Dendritic cell treated with granulocyte-macrophage colony-stimulating factor and Interleukin-4, amounts not matched to agents 40 ng/mL and 50 ng/mL, for 4 days (primary cell): ENCODE measurements at regions of chr1 and their contacts with region 1.

Region 1: GRCh38 chr1:109041621-109042468 is at the start of gene WDR47:
- H3K4me3 Mint-ChIP-seq: peak within 1 kb of the TSS; percentile 98
- H3K27ac Mint-ChIP-seq: peak within 1 kb of the TSS; percentile 93
- H3K4me1 Mint-ChIP-seq: peaks cover 5% of the 10 kb centered on the region
- H3K27me3 Mint-ChIP-seq: peaks cover 8% of the 10 kb centered on the region

Region 2: GRCh38 chr1:108801101-108801500 is 240.7 kb before region 1 on chr1:
- intact Hi-C with region 1: no loop called
- H3K4me3 Mint-ChIP-seq: no peak overlapping the region
- H3K27ac Mint-ChIP-seq: no peak overlapping the region
- H3K4me1 Mint-ChIP-seq: no peaks in the 10 kb centered on the region
- H3K27me3 Mint-ChIP-seq: no peaks in the 10 kb centered on the region

Region 3: DNA sequence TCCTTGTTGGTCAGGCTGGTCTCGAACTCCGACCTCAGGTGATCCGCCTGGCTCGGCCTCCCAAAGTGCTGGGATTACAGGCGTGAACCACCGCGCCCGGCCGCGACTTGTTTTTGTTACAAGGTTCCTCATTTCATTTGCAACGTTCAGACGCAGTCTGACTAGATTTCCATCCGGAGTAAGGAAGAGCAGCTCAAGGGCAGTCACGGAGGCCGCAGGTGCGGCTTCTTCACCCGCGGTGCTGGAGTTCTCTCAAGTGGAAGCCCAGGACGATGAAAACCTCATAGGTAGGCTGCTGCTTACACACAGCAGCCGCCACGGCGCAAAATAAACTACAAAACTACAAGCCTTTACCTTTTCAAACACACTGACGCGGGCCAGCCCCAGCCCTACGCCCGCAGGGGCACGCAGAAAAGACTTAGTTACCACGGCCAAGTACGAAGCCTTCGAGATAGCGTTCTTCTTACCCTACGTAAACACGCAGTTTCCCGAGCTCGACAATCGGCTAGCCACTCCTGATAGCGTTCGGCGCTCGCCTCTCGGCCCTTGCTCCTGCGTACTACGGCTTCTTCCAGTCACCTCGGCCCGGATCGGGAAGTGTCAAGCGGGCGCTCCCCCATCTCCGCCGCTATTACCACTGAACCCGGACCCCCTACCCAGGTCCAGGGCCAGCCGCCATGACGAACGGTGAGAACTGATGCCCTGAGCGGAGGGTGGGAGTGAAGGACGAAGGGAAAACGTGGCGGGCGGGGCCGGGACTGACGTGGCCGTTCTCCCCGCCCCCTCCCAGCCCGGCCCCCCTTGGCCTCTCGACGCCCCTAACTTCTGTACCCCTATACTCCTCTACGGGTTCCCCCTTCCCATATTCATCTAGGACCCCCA is 48.6 kb after region 1 on chr1 and contains the start of gene TMEM167B:
- intact Hi-C with region 1: loop called (anchors 2 kb)
- H3K4me3 Mint-ChIP-seq: peak within 1 kb of the TSS; percentile 97
- H3K27ac Mint-ChIP-seq: peak within 1 kb of the TSS; percentile 97
- H3K4me1 Mint-ChIP-seq: peaks cover 25% of the 10 kb centered on the region
- H3K27me3 Mint-ChIP-seq: no peaks in the 10 kb centered on the region